BJ (cell line): ENCODE measurements at regions of chr11 and their contacts with region 1.

Region 1: GRCh38 chr11:117178210-117179034 is at the start of gene SIDT2:
- DNase-seq: peak; percentile 64
- H3K4me3 ChIP-seq: peak within 1 kb of the TSS; percentile 71
- H3K27me3 ChIP-seq: no peaks in the 10 kb centered on the region
- CTCF ChIP-seq: no peak
- polyA plus RNA-seq, gene SIDT2: 44.4 and 71.3 TPM in 2 replicates

Region 2: DNA sequence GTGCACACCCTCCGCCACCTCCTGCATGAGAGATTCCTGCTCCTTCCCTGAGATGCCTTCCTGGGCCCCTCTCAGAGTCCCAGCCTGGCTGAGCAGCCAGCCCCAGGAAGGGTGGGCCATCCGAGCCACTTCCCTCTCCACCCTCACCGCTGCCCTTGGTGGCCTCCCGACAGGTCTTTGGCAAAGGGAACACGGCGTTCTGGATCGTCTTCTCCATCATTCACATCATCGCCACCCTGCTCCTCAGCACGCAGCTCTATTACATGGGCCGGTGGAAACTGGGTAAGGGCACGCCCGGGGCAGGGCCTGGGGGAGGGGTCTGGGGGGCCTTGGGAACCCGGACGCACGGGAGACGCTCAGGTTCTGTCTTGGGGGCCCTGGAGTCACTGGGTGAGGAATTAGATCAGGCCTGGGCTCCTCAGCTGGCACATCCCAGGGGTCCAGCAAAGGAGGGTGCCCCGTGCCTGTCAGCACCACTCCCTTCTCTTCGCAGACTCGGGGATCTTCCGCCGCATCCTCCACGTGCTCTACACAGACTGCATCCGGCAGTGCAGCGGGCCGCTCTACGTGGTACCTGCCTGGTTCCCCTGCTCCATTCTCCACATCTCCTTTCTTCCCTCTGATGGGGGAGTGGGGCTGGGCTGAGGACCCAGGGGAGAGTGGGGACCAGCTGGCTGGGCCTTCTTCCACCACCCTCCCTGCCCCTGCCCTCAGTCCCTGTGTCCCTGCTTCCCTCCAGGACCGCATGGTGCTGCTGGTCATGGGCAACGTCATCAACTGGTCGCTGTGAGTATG is 13.9 kb after region 1 on chr11:
- CTCF ChIA-PET with region 1: interaction called, 20 read pairs
- POLR2A ChIA-PET with region 1: interaction called, 3 read pairs
- DNase-seq: no peak
- H3K4me3 ChIP-seq: no peak overlapping the region
- H3K27me3 ChIP-seq: no peaks in the 10 kb centered on the region
- CTCF ChIP-seq: no peak

Region 3: DNA sequence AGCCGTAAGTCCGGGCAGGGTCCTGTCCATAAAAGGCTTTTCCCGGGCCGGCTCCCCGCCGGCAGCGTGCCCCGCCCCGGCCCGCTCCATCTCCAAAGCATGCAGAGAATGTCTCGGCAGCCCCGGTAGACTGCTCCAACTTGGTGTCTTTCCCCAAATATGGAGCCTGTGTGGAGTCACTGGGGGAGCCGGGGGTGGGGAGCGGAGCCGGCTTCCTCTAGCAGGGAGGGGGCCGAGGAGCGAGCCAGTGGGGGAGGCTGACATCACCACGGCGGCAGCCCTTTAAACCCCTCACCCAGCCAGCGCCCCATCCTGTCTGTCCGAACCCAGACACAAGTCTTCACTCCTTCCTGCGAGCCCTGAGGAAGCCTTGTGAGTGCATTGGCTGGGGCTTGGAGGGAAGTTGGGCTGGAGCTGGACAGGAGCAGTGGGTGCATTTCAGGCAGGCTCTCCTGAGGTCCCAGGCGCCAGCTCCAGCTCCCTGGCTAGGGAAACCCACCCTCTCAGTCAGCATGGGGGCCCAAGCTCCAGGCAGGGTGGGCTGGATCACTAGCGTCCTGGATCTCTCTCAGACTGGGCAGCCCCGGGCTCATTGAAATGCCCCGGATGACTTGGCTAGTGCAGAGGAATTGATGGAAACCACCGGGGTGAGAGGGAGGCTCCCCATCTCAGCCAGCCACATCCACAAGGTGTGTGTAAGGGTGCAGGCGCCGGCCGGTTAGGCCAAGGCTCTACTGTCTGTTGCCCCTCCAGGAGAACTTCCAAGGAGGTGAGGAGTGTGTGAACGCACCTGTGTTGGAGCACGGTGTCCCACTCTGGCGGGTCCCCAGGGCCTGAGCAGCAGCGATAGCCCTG is 20.9 kb after region 1 on chr11 and contains the start of gene TAGLN:
- CTCF ChIA-PET with region 1: interaction called, 20 read pairs
- POLR2A ChIA-PET with region 1: interaction called, 3 read pairs
- DNase-seq: peak; percentile 86
- H3K4me3 ChIP-seq: peak within 1 kb of the TSS; percentile 63
- H3K27me3 ChIP-seq: no peaks in the 10 kb centered on the region
- CTCF ChIP-seq: no peak
- polyA plus RNA-seq, gene TAGLN: 5,131 and 6,322 TPM in 2 replicates

Region 4: GRCh38 chr11:117210620-117211019 is 32.2 kb after region 1 on chr11:
- CTCF ChIA-PET with region 1: interaction called, 11 read pairs
- POLR2A ChIA-PET with region 1: interaction called, 4 read pairs
- DNase-seq: no peak
- H3K4me3 ChIP-seq: no peak overlapping the region
- H3K27me3 ChIP-seq: no peaks in the 10 kb centered on the region
- CTCF ChIP-seq: no peak

Region 5: DNA sequence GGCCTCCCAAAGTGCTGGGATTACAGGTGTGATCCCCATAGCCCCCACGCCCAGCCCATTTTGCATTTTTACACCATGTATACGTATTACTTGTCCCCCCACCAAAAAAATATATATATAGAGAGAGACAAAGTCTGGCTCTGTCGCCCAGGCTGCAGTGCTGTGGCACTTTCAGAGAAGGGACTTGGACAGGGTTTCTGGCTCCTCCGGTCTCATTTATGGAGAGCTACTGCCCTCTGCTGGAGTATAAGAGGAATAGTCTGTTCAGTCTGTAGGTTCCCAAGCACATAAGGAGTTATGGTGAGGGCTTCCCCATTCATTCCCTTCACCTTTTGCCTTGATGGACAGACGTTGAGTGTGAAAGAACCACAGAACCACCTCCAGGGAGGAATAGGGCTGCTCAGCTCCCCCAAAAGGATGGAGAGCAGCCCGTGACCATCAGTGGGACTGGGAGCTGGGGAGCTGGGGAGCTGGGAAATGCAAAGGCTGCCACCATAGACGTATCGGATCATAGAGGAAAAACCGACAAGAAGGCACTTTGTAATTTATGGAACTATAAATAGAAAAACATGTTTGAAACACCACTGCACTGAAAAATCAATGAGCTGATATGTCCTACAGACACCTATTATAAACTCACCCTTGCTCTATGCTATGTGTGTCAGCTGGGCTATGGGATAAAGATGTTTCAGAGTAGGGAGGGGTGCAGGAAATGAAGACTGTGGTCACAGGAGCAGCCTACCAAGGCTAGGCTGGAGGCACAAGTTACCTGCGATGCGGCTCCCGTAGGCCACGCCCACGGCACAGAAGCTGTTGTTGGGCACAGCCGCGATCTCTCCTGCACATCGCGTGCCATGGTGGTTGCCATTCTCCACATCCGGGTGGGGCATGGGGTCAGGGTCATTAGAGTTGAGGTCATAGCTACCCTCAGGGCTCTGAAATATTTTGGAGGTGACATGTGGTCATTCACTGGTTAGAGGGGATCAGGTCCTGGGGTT is 48.3 kb after region 1 on chr11:
- CTCF ChIA-PET with region 1: interaction called, 44 read pairs
- POLR2A ChIA-PET with region 1: interaction called, 6 read pairs
- DNase-seq: no peak
- H3K4me3 ChIP-seq: no peak overlapping the region
- H3K27me3 ChIP-seq: no peaks in the 10 kb centered on the region
- CTCF ChIP-seq: peak; percentile 77

Region 6: GRCh38 chr11:117232092-117232878 is 53.9 kb after region 1 on chr11 and contains the start of gene RNF214:
- CTCF ChIA-PET with region 1: interaction called, 44 read pairs
- POLR2A ChIA-PET with region 1: interaction called, 3 read pairs
- DNase-seq: no peak
- H3K4me3 ChIP-seq: peak within 1 kb of the TSS; percentile 89
- H3K27me3 ChIP-seq: no peaks in the 10 kb centered on the region
- CTCF ChIP-seq: peak; percentile 69
- polyA plus RNA-seq, gene RNF214: 11.5 and 17.1 TPM in 2 replicates